Activated naive CD4-positive, alpha-beta T cell treated with anti-CD3 and anti-CD28 coated beads for 36 hours (primary cell): ENCODE measurements at regions of chr7 and their contacts with region 1.

Region 1: DNA sequence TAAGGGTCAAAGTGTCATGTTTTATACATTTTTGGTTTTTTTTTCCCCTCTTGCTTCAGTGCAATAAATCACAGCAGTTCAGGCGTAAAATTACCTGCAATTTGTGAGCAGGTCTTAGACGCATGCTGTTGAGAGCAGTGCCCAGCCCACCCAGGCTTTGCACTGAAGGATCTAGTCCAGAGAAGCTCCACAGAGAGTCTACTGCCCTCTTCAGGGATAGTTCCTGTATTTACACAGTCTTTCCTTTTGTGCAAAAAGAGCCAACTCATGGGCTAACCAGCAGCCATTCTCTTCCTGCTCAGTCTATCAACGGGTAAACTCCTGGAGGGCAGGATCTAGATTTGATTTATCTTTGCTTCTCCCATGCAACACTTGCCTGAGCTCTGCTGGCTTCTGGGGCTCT is 82.2 kb upstream of the NAMPT start:
- DNase-seq: no peak
- H3K4me3 Mint-ChIP-seq: no peak overlapping the region
- H3K27ac Mint-ChIP-seq: peak overlapping the region; percentile 70
- H3K4me1 Mint-ChIP-seq: peaks cover 44% of the 10 kb centered on the region
- H3K27me3 Mint-ChIP-seq: peaks cover 23% of the 10 kb centered on the region

Region 2: GRCh38 chr7:106405697-106406141 is 38.7 kb after region 1 on chr7:
- CTCF ChIA-PET with region 1: no interaction called
- intact Hi-C with region 1: loop called (anchors 1 kb)
- DNase-seq: peak; percentile 53
- H3K4me3 Mint-ChIP-seq: no peak overlapping the region
- H3K27ac Mint-ChIP-seq: peak overlapping the region; percentile 50
- H3K4me1 Mint-ChIP-seq: peaks cover 32% of the 10 kb centered on the region
- H3K27me3 Mint-ChIP-seq: peaks cover 44% of the 10 kb centered on the region